Activated CD4-positive, alpha-beta memory T cell treated with anti-CD3 and anti-CD28 coated beads, Interleukin-2, amount 10 ng/mL, durations not matched to agents 7 days and 5 days (primary cell): ENCODE measurements at regions of chr21 and their contacts with region 1.

Region 1: DNA sequence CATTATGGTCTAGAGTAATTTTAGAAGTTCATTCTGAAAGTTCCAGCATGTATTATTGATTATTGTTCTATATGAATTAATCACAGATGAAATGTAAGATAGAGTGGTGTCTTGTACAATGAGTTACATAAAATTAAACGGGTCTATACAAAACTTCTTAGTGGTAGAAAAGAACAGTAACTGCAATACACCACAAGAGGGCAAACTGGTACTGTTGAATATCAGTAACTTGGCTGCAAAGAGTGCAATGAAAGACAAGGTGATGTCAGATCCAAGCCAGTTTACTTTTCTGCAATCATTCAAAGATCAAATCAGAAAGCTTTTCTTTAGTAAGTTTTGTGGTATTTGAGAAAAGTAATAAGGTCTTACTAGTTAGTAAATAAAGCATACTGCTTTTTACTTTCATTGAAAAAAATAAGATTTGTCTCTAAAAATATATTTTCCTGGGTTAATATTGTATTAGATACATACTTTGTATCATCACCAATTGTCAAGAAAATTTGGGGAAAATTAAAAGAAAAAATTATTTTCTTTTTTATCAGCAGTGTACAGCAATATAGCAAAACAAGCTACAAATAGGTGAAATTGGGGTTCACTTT is 66.4 kb upstream of the BTG3 start:
- DNase-seq: no peak
- H3K4me3 Mint-ChIP-seq: no peak overlapping the region
- H3K27ac Mint-ChIP-seq: no peak overlapping the region
- H3K4me1 Mint-ChIP-seq: no peaks in the 10 kb centered on the region
- H3K27me3 Mint-ChIP-seq: no peaks in the 10 kb centered on the region

Region 2: DNA sequence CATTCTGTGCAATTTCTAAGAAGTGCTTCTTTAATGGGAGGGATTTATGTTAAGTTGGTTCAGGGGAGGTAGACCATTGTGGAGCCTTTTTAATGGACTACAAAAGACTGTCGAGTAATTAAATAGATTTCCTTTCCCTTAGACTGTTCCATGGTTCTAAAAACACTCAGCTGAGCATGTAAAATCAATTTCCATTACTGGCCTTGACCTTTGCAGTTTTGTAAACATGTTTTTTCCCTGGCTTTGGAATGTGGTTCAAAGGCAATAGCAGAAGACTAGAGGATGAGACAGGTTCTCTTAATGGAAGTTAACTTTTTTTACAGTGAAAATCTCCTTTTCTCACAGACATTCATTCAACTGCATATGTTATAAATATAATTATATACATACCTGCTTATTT is 28.8 kb before region 1 on chr21:
- CTCF ChIA-PET with region 1: no interaction called
- POLR2A ChIA-PET with region 1: no interaction called
- DNase-seq: no peak
- H3K4me3 Mint-ChIP-seq: no peak overlapping the region
- H3K27ac Mint-ChIP-seq: no peak overlapping the region
- H3K4me1 Mint-ChIP-seq: no peaks in the 10 kb centered on the region
- H3K27me3 Mint-ChIP-seq: peaks cover 10% of the 10 kb centered on the region

Region 3: DNA sequence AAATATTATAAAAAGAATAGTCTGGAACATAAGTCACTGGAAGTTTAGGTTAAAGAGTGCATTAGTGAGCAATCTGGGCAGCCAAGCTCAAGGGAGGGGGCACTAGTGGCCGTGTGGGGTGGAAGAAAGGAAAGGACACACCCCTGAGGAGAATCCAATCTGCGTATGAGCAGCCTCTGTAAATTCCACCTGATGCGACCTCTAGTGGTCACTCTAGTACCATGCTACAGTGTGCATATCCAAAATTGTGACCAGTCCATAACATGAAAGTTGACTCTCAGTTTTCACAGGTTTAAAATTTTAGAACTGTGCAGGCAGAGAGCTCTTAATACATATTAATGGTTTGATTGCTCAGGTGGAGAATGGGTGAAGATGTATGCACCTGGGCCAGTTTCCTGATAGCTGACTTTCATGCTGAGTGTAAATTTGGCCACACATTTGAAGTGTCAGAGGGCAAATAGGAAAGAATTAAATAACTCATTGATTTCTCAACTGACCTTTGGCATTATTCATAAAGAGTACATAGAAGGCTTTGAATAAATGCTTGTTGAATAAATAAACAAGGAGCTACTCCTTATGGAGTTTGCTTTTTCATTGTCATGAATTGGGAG is 246.0 kb after region 1 on chr21:
- CTCF ChIA-PET with region 1: interaction called, 25 read pairs
- POLR2A ChIA-PET with region 1: no interaction called
- DNase-seq: peak; percentile 56
- H3K4me3 Mint-ChIP-seq: no peak overlapping the region
- H3K27ac Mint-ChIP-seq: no peak overlapping the region
- H3K4me1 Mint-ChIP-seq: no peaks in the 10 kb centered on the region
- H3K27me3 Mint-ChIP-seq: peaks cover 5% of the 10 kb centered on the region